Head of caudate nucleus (tissue), 42 donors: ENCODE measurements at regions of chr22 and their contacts with region 1.

Region 1: GRCh38 chr22:38353142-38353629 is 36.0 kb upstream of the CSNK1E start:
- DNase-seq: peak; percentile 14 to 87 (median 69)

Region 2: DNA sequence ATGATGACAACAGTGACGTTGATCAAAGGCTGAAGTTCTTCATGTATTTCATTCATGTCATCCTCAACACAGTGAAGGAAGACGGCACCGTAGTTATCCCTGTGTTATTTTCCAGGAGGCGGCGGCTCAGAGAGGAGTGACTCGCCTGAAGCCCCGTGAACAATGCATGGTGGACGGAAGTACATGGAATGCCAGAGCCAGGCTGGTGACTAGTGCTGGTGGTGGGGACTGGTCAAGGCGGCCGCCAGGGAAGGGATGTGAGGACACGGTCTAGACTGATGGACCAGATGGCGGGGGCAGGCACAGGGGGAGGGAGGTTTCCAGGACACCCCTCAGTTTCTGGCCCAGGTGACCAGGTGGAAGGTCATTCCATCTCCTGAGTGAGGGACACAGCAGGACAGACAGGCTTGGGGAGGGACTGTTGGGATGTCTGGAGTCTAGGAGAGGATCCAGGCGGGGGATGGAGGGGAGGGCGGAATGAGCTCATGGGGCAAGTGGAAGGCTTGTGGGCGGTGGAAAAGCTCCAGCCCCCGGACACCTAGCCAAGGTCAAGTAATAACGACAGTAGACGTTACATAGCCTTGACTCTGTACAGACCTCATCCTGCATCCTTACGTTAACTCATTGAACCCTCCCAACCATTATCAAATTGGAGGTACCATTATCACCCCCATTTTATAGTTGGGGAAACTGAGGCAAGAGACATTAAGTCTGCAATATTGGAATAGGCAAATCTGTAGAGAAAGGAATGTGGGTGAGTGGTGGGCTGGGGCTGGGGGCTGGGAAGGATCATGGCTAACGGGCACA is 312.0 kb before region 1 on chr22:
- intact Hi-C with region 1: no loop called
- DNase-seq: peak in 3 of 42 donors; percentile 10 to 76 (median 59)

Region 3: GRCh38 chr22:38051900-38052862 is 301.0 kb before region 1 on chr22:
- intact Hi-C with region 1: loop called (anchors 10 kb)
- DNase-seq: peak; percentile 83 to 96 (median 90)

Region 4: DNA sequence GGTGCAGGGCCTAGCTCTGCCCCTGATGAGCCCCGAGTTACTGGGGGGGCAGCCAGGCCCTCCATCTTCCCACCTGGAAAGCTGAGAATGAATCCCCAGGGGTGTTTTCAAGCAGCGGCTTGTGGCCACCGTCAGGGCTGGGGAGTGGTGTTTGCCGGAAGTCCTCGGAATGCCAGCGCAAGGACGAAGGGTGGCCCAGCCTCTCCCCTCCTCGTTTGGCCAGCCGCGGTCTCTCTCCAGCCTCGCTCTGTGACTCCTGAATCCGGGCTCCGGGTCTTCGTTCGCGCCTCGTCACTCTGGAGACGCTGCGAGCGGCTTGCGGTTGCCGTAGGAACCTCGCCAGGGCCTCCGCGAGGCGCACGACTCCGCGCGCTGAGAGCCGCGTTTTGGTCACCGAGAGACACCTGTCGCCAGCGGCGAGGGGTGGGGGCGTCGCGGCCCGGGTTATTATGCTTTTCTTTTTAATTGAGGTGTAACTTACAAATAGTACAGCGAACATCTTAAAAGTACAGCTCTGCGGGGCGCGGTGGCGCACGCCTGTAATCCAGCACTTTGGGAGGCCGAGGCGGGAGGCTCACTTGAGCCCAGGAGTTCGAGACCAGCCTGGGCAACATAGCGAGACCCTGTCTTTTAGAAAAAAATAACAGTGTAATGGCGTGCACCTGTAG is 108.4 kb after region 1 on chr22:
- intact Hi-C with region 1: no loop called
- DNase-seq: peak; percentile 68 to 94 (median 86)